ENCODE measurements at regions of chr17 and their contacts with region 1.

Region 1: DNA sequence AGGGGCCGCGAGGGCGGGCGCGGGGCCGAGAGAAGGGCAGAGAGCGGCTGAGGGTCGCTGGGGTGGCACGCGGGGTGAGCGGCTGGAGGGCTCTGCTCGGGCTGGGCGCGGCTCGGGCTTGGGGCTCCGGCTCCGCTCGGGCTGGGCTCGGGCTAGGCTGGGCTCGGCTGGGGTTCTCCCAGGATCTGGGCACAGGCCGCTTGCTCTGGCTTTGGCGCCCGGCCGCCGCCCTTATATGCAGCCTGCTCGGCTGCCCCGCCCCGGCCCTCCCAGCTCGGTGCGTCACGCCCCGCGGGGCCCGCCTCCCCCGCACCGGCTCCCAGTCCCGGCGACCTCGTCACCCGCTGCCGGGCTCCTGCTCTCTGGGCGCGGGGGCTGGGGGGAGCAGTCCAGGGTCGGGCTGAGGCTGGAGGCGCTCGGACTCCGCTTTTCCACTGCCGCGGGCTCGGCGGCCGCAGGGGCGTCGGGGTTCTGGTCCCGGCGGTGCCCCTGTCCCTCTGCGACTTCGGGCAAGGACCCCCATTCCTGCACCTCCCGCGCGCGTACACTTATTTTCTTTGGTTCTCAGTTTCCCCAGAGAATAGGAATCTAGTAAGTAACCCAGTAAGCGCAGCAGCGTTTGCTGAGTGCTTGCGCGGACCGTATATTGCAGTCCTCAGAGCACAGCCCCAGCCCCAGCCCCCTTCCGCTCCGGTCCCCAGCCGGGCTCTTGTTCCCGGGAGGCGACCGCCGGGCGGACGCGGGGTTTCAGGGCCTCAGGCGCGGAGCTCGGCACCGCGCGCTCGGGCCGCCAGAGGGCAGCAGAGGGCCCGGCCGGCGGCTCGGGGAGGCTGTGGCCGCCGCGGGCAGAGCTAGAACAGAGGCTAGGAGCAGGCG is at the start of gene RASD1:
- DNase-seq: peak; percentile 93
- ATAC-seq: peak; percentile 92 to 95
- total RNA-seq, gene RASD1: 35.3 to 55.1 TPM

Region 2: DNA sequence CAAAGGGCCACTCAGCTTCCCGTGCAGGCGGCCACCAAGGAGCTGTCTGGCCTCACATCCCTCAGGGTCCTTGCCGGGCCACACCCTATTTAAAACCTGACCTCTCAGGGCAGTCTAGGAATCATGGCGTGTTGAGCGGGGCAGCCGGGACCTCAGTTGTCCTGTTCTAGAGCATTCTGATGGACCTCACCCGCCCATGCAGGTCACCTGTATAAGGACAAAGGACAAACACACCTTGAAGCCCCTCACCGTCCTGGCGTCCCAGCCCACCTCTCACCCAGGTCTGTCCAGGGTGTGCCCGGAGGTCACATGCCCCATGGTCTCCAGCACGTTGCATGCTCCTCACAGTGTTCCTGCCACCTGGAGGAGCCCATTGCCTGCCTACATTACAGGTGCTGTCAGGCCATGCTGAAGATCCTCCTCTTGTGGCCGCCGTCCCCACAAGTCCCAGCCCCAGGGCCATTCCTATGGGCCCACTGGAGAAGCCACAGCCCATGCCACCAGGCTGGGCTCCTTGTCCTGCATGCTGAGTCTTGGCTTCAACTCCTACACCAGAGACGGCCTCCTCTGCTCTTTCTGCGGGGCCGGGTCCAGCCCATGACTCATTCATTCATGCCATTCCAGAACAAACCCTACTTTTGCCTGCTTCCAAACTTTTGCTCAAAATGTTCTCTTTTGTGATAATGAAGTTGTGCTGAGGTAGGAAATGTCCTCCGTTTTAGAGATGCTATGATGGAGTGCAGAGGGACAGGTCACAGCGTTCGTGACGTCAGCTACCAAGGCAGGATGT is 48.8 kb after region 1 on chr17:
- intact Hi-C with region 1: loop called in 1 of 2 experiments (anchors 5 kb)
- DNase-seq: peak; percentile 62
- ATAC-seq: peak; percentile 19 to 61

Region 3: DNA sequence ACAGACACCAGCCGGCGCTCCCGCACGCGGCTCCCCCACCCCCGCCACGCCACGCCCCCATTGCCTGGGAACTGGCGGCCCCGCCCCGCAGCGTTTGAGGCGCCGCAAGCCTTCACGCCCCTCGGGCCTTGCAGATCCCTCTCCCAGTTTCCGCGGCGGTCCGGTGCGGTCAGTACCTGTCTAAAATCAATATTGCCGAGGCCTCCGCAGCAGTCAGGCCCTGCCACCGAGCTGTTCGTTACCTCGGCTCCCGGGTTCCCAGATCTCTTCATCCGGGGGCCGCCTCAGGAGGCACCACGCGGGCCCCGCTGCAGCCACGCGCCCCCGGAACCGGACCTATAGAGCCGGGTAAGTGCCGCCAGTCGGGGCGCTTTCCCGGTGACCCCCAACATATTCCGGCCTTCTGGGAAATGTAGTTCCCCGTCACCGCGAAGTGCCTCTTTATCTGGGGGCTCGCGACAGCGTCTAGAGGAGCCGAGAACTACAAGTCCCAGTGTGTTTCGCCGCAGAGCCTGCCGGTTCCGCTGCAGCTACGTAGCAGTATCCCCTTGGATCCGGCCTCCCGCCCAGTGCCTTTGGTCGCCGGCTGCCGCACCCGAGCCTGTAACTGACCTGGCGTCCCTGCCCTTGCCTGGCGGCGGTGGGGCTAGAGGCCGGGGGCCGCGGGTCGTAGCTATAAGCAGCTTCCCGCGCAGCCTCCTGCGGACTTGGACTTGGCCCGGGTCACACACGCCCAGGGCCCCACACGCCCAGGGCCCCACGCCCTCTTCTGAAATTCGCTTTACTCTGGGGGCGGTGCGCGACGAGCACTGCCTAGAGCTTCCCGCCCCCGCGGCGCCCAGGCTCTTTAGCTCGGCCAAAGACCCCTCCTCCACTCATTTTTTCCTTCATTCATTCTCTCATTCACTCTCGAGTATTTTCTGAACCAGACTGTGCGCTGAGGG is 95.2 kb after region 1 on chr17 and contains the start of gene PEMT:
- intact Hi-C with region 1: no loop called
- DNase-seq: peak; percentile 98
- ATAC-seq: peak; percentile 97 to 99
- total RNA-seq, gene PEMT: 28.1 to 36.5 TPM

Region 4: DNA sequence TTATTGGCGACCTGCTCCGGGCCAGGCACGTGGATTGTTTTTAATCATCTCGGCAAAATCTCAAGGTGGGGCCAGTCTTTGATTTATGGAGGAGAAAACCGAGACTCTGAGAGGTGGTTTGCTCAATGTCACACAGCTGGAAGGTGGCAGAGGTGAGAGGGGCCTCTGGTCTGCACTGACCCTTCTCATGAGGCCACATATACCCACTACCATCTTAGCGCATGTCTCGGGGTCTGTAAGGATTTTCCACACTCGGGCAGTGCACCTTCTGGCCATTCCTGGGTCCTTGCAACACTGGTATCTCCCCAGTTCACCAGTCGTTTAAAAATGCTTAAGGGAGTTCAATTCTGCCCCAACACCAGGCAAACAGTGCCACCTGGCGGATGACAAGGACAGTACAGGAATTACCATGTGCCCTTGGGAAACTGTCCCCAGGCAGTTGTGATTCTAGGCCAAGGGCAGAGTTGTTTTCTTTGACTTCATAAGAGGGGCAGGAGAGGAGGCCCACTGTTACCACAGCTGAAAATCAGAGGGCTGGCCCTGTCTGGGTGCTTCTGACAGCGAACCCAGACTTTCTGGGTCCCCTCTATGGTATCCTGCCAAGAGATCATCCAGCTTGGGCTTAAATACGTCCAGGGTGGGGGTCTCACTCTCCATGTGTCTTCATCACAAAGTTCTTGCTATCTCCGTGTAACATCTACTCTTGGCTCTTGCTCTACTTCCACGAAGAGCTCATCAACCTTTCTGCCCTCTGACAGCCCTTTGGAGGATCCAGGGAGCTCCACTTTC is 145.4 kb after region 1 on chr17:
- intact Hi-C with region 1: loop called in 1 of 2 experiments (anchors 5 kb)
- DNase-seq: peak; percentile 80
- ATAC-seq: peak; percentile 84 to 89